Activated CD8-positive, alpha-beta T cell treated with anti-CD3 and anti-CD28 coated beads, Interleukin-2, amount 10 ng/mL, durations not matched to agents 7 days and 5 days (primary cell): ENCODE measurements at regions of chr16 and their contacts with region 1.

Region 1: GRCh38 chr16:3879887-3880564 is 487 bp downstream of the CREBBP start:
- DNase-seq: peak; percentile 76
- ATAC-seq: peak; percentile 61
- H3K4me3 Mint-ChIP-seq: peak overlapping the region; percentile 89
- H3K27ac Mint-ChIP-seq: no peak overlapping the region
- H3K4me1 Mint-ChIP-seq: peaks cover 43% of the 10 kb centered on the region
- H3K27me3 Mint-ChIP-seq: peaks cover 4% of the 10 kb centered on the region

Region 2: DNA sequence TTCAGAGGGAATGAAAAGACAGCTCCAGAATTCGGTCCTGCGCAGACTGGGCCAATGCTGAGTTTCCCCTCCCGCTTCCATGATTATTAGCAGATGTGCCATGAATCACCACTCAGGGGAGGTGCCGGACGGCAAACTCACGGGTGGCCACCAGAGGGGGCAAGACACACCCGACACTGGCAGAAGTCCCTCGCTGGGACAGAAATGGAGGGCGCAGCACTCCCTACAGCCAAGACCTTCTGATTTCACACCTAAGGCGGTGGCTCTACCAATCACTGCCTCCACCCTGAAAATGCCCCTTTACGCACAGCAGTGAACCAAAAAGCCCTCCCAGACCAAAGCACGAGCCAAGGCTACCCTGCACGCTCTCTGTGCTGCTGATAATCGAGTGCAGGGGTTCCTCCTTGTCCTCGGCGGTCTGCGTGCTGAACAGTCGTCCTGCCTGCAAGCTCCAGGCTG is 189.5 kb before region 1 on chr16:
- CTCF ChIA-PET with region 1: interaction called, 10 read pairs
- POLR2A ChIA-PET with region 1: interaction called, 3 read pairs
- DNase-seq: peak; percentile 88
- ATAC-seq: peak; percentile 97
- H3K4me3 Mint-ChIP-seq: no peak overlapping the region
- H3K27ac Mint-ChIP-seq: peak overlapping the region; percentile 71
- H3K4me1 Mint-ChIP-seq: peaks cover 16% of the 10 kb centered on the region
- H3K27me3 Mint-ChIP-seq: no peaks in the 10 kb centered on the region

Region 3: GRCh38 chr16:3780570-3780969 is 99.5 kb before region 1 on chr16:
- CTCF ChIA-PET with region 1: interaction called, 18 read pairs
- POLR2A ChIA-PET with region 1: no interaction called
- DNase-seq: peak; percentile 49
- ATAC-seq: peak; percentile 75
- H3K4me3 Mint-ChIP-seq: no peak overlapping the region
- H3K27ac Mint-ChIP-seq: no peak overlapping the region
- H3K4me1 Mint-ChIP-seq: peaks cover 4% of the 10 kb centered on the region
- H3K27me3 Mint-ChIP-seq: no peaks in the 10 kb centered on the region

Region 4: GRCh38 chr16:3849751-3850543 is 30.1 kb before region 1 on chr16:
- CTCF ChIA-PET with region 1: no interaction called
- POLR2A ChIA-PET with region 1: no interaction called
- DNase-seq: no peak
- ATAC-seq: no peak
- H3K4me3 Mint-ChIP-seq: no peak overlapping the region
- H3K27ac Mint-ChIP-seq: no peak overlapping the region
- H3K4me1 Mint-ChIP-seq: peaks cover 10% of the 10 kb centered on the region
- H3K27me3 Mint-ChIP-seq: no peaks in the 10 kb centered on the region